ENCODE measurements at regions of chr12 and their contacts with region 1.

Region 1: DNA sequence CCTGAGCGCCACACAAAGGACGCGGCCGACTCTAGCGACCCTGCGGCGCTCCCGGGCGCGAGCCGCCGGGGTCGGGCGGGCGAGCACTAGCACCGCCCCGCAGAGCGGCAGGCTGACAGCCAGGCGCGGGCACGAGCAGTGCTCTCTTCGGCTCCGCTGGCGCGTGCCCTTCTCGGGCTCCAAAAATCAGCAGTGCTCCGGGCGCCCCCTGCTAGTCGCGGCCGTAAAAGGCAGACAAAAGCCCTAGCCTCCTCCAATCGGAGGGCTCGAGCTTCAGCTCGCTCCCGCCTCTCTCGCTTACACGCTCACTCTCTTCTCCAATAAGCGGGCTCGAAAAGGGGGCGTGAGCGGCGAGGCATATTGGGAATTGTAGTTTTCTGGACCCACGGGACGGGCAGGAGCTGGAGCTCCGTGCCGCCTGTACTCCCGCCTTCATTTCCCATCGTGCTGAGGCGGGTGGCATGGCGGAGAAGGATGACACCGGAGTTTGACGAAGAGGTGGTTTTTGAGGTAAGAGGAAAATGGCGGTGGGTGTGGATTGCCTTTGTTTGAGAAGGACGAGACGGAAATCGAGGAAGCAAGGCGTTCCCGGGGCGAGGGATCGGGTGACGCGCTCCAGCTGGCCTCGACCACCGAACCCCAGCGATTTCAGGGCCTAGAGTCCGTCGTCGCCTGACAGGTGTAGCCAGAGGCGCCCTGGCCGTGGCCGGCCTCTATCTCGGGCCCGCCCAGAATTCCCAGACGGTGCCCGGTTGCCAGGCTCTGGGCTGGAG is at the starts of genes FGD6 and VEZT:
- DNase-seq: peak; percentile 93 to 99 (median 98)
- ATAC-seq: peak; percentile 91
- H3K4me3 ChIP-seq: peak within 1 kb of the TSS; percentile 96
- H3K4me3 Mint-ChIP-seq: peak within 1 kb of the TSS; percentile 96
- H3K27ac ChIP-seq: peak within 1 kb of the TSS; percentile 90 to 95
- H3K27ac Mint-ChIP-seq: peak within 1 kb of the TSS; percentile 97
- H3K4me1 ChIP-seq: peaks cover 17% of the 10 kb centered on the region
- H3K4me1 Mint-ChIP-seq: peaks cover 37% of the 10 kb centered on the region
- H3K27me3 ChIP-seq: no peaks in the 10 kb centered on the region
- H3K27me3 Mint-ChIP-seq: peaks cover 5% of the 10 kb centered on the region
- CTCF ChIP-seq: peak; percentile 41
- total RNA-seq, gene FGD6: 0.94 to 1.6 TPM
- total RNA-seq, gene VEZT: 48.4 to 57.7 TPM

Region 2: DNA sequence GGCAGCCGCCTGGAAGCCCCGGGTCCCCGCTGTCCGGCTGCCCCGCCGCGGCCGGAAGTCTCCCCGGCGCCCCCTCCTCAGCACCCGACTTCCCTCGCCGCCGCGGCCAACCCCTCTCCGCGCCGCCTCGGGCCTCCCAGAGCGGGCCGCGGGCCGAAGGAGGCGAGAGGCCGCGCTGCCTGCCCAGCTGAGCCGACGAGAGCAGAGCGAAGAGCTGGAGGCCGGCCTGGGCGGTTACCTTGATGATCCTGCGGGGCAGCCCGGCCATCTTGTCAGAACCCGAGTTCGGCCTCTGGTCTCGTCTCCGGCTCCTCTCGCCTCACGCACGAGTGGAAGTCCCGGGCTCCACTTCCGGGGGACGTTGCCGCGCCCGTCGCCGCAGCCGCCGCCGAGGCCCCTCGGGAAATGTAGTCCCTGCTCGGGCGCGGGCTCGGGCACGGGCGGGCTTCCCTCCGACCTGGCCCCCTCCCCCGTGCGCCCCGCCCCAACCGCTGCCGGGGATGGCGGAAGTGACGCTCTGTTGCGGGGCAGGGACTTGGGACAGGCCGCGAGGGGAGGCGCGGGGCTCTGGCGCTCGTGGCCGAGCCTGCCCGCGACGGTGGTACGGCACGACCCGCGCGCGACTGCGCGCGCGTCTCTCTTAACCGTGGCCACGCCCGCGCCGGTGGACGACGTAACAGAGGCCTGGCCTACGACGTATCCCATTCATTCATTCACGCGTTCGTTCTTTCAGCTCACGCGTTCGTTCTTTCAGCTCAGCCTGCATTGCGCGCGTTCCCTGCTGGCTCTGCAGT is 1775.7 kb before region 1 on chr12 and contains the start of gene UBE2N:
- CTCF ChIA-PET with region 1: no interaction called
- POLR2A ChIA-PET with region 1: no interaction called
- intact Hi-C with region 1: loop called in 1 of 2 experiments (anchors 5 kb)
- DNase-seq: peak; percentile 92 to 97 (median 96)
- ATAC-seq: peak; percentile 83
- H3K4me3 ChIP-seq: peak within 1 kb of the TSS; percentile 78
- H3K4me3 Mint-ChIP-seq: peak within 1 kb of the TSS; percentile 97
- H3K27ac ChIP-seq: peak within 1 kb of the TSS; percentile 87 to 90
- H3K27ac Mint-ChIP-seq: peak within 1 kb of the TSS; percentile 96
- H3K4me1 ChIP-seq: peaks cover 47% of the 10 kb centered on the region
- H3K4me1 Mint-ChIP-seq: peaks cover 48% of the 10 kb centered on the region
- H3K27me3 ChIP-seq: no peaks in the 10 kb centered on the region
- H3K27me3 Mint-ChIP-seq: no peaks in the 10 kb centered on the region
- CTCF ChIP-seq: no peak
- total RNA-seq, gene UBE2N: 89.5 to 93.6 TPM

Region 3: GRCh38 chr12:94849411-94849976 is 368.1 kb before region 1 on chr12:
- CTCF ChIA-PET with region 1: no interaction called
- POLR2A ChIA-PET with region 1: no interaction called
- intact Hi-C with region 1: no loop called
- DNase-seq: no peak
- ATAC-seq: no peak
- H3K4me3 ChIP-seq: no peak overlapping the region
- H3K4me3 Mint-ChIP-seq: no peak overlapping the region
- H3K27ac ChIP-seq: no peak overlapping the region
- H3K27ac Mint-ChIP-seq: no peak overlapping the region
- H3K4me1 ChIP-seq: no peaks in the 10 kb centered on the region
- H3K4me1 Mint-ChIP-seq: no peaks in the 10 kb centered on the region
- H3K27me3 ChIP-seq: no peaks in the 10 kb centered on the region
- H3K27me3 Mint-ChIP-seq: peaks cover 17% of the 10 kb centered on the region
- CTCF ChIP-seq: no peak

Region 4: GRCh38 chr12:95003213-95003920 is 214.2 kb before region 1 on chr12 and contains the start of gene NDUFA12:
- CTCF ChIA-PET with region 1: no interaction called
- POLR2A ChIA-PET with region 1: no interaction called
- intact Hi-C with region 1: loop called (anchors 1 to 5 kb)
- DNase-seq: peak; percentile 87 to 98 (median 94)
- ATAC-seq: peak; percentile 99
- H3K4me3 ChIP-seq: peak within 1 kb of the TSS; percentile 74 to 97
- H3K4me3 Mint-ChIP-seq: peak within 1 kb of the TSS; percentile 93
- H3K27ac ChIP-seq: peak within 1 kb of the TSS; percentile 64 to 82
- H3K27ac Mint-ChIP-seq: peak within 1 kb of the TSS; percentile 94
- H3K4me1 ChIP-seq: peaks cover 46% of the 10 kb centered on the region
- H3K4me1 Mint-ChIP-seq: peaks cover 57% of the 10 kb centered on the region
- H3K27me3 ChIP-seq: no peaks in the 10 kb centered on the region
- H3K27me3 Mint-ChIP-seq: no peaks in the 10 kb centered on the region
- CTCF ChIP-seq: no peak
- total RNA-seq, gene NDUFA12: 37.4 to 42.4 TPM

Region 5: DNA sequence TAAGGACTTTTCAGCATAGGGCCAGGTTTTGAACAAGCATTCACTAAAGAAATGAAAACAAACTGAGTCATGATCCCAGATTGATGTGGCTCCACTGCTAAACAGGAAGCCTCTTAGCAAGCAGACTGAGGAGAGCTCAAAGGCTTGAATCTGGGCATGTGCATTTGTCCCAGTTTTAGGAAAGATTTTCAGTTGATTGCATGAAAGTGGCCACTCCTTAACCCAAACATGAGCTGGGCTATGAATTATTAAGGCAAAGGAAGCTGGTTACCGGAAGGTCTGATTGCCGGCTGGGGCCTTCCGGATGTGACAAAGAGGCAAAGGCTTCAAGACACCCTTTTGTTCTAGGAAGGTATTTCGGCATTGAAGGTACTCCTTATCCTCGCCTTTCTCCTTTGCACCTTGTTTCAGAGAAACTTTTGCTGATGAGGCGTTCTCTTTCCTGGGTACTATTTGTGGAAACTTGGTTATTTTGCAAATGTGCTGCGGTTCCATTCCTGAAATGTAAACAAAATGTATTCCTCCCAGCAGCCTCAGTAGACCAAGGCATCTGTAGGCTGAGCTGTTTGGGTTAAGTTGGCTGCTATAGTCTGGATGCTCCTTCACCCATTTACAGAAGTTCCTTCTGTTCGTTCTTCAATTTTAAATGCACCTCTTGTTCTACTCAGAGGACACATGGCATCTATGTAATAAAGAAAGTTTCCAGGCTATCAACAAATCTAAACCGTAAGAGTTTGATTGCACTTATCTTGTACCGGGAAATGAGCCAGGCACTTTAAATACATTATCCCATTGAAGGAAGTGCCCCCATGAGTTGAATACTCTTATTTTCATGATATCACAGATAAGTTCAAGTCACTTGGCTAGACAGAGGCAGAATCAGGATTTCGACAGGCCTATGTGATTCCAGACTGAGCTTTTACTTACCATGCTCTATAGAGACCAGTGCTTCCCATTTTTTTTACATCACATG is 140.8 kb after region 1 on chr12:
- CTCF ChIA-PET with region 1: no interaction called
- POLR2A ChIA-PET with region 1: no interaction called
- intact Hi-C with region 1: no loop called
- DNase-seq: no peak
- ATAC-seq: no peak
- H3K4me3 ChIP-seq: no peak overlapping the region
- H3K4me3 Mint-ChIP-seq: no peak overlapping the region
- H3K27ac ChIP-seq: no peak overlapping the region
- H3K27ac Mint-ChIP-seq: no peak overlapping the region
- H3K4me1 ChIP-seq: no peaks in the 10 kb centered on the region
- H3K4me1 Mint-ChIP-seq: no peaks in the 10 kb centered on the region
- H3K27me3 ChIP-seq: no peaks in the 10 kb centered on the region
- H3K27me3 Mint-ChIP-seq: no peaks in the 10 kb centered on the region
- CTCF ChIP-seq: no peak

Region 6: GRCh38 chr12:95473884-95474659 is 256.5 kb after region 1 on chr12 and contains the start of gene METAP2:
- CTCF ChIA-PET with region 1: no interaction called
- POLR2A ChIA-PET with region 1: interaction called, 16 read pairs
- intact Hi-C with region 1: loop called (anchors 1 to 2 kb)
- DNase-seq: peak; percentile 73 to 94 (median 91)
- ATAC-seq: peak; percentile 97
- H3K4me3 ChIP-seq: peak within 1 kb of the TSS; percentile 77 to 88
- H3K4me3 Mint-ChIP-seq: peak within 1 kb of the TSS; percentile 99
- H3K27ac ChIP-seq: peak within 1 kb of the TSS; percentile 78 to 84
- H3K27ac Mint-ChIP-seq: peak within 1 kb of the TSS; percentile 98
- H3K4me1 ChIP-seq: peaks cover 29% of the 10 kb centered on the region
- H3K4me1 Mint-ChIP-seq: peaks cover 54% of the 10 kb centered on the region
- H3K27me3 ChIP-seq: no peaks in the 10 kb centered on the region
- H3K27me3 Mint-ChIP-seq: no peaks in the 10 kb centered on the region
- CTCF ChIP-seq: no peak
- total RNA-seq, gene METAP2: 68.3 to 69.9 TPM

Region 7: GRCh38 chr12:95942524-95943329 is 725.2 kb after region 1 on chr12 and contains the start of gene CCDC38:
- CTCF ChIA-PET with region 1: no interaction called
- POLR2A ChIA-PET with region 1: interaction called, 3 read pairs
- intact Hi-C with region 1: loop called in 1 of 2 experiments (anchors 2 kb)
- DNase-seq: peak; percentile 63 to 92 (median 82)
- ATAC-seq: peak; percentile 92
- H3K4me3 ChIP-seq: peak within 1 kb of the TSS; percentile 67 to 83
- H3K4me3 Mint-ChIP-seq: peak within 1 kb of the TSS; percentile 96
- H3K27ac ChIP-seq: peak within 1 kb of the TSS; percentile 71 to 79
- H3K27ac Mint-ChIP-seq: peak within 1 kb of the TSS; percentile 92
- H3K4me1 ChIP-seq: peaks cover 11% of the 10 kb centered on the region
- H3K4me1 Mint-ChIP-seq: peaks cover 10% of the 10 kb centered on the region
- H3K27me3 ChIP-seq: no peaks in the 10 kb centered on the region
- H3K27me3 Mint-ChIP-seq: no peaks in the 10 kb centered on the region
- CTCF ChIP-seq: no peak
- total RNA-seq, gene CCDC38: not detected

Region 8: GRCh38 chr12:96906849-96907670 is 1689.5 kb after region 1 on chr12 and contains the start of gene NEDD1:
- CTCF ChIA-PET with region 1: no interaction called
- POLR2A ChIA-PET with region 1: no interaction called
- intact Hi-C with region 1: loop called (anchors 5 to 10 kb)
- DNase-seq: peak; percentile 65 to 90 (median 81)
- ATAC-seq: peak; percentile 72
- H3K4me3 ChIP-seq: peak within 1 kb of the TSS; percentile 99
- H3K4me3 Mint-ChIP-seq: peak within 1 kb of the TSS; percentile 91
- H3K27ac ChIP-seq: peak within 1 kb of the TSS; percentile 99 to 100
- H3K27ac Mint-ChIP-seq: peak within 1 kb of the TSS; percentile 99
- H3K4me1 ChIP-seq: peaks cover 21% of the 10 kb centered on the region
- H3K4me1 Mint-ChIP-seq: peaks cover 46% of the 10 kb centered on the region
- H3K27me3 ChIP-seq: no peaks in the 10 kb centered on the region
- H3K27me3 Mint-ChIP-seq: no peaks in the 10 kb centered on the region
- CTCF ChIP-seq: no peak
- total RNA-seq, gene NEDD1: 26.7 to 27.8 TPM